CD4-positive, alpha-beta T cell (primary cell): ENCODE measurements at regions of chr13 and their contacts with region 1.

Region 1: GRCh38 chr13:41132512-41133152 is at the start of gene KBTBD6:
- DNase-seq: peak; percentile 81 to 96 (median 88)
- ATAC-seq: peak; percentile 96
- H3K4me3 ChIP-seq: peak within 1 kb of the TSS; percentile 91
- H3K4me3 Mint-ChIP-seq: peak within 1 kb of the TSS; percentile 96
- H3K27ac ChIP-seq: peak within 1 kb of the TSS; percentile 50 to 68
- H3K27ac Mint-ChIP-seq: peak within 1 kb of the TSS; percentile 86
- H3K4me1 ChIP-seq: peaks cover 37% of the 10 kb centered on the region
- H3K4me1 Mint-ChIP-seq: peaks cover 54% of the 10 kb centered on the region
- H3K27me3 ChIP-seq: no peaks in the 10 kb centered on the region
- H3K27me3 Mint-ChIP-seq: no peaks in the 10 kb centered on the region
- CTCF ChIP-seq: no peak
- total RNA-seq, gene KBTBD6: 6.8 to 7.2 TPM

Region 2: DNA sequence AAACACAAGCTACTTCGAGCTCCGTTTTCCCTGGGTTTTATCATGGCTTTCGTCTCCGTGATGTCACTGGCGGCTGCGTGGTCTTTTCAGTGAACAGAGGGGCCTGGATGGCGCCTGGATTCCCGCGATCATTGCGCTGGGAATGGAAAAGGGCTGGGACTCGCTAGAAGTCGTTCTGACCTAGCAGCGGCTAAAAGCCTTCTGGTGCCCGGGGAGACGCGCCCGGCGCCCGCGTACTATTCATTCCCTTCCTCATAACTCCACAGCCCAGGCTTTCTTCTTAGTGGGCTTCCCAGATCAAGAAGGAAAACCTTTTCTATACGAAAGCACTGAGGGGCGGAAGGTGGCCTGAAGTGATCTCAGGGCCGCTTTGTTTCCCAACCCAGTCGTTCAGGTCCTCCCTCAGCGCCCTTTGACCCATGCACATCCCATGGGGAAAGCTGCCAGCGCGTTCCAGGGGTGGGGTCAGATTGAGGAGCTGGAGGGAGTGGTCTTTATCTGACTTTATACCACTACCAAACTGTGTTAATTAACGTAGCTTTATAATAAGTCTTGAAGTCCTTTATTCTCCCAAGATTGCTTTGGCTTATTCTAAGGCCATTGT is 210.1 kb before region 1 on chr13:
- CTCF ChIA-PET with region 1: no interaction called
- POLR2A ChIA-PET with region 1: no interaction called
- intact Hi-C with region 1: loop called (anchors 5 to 10 kb)
- DNase-seq: peak in 2 of 14 experiments; percentile 9 to 37
- ATAC-seq: no peak
- H3K4me3 ChIP-seq: no peak overlapping the region
- H3K4me3 Mint-ChIP-seq: peak overlapping the region; percentile 80
- H3K27ac ChIP-seq: no peak overlapping the region
- H3K27ac Mint-ChIP-seq: peak overlapping the region; percentile 42
- H3K4me1 ChIP-seq: peaks cover 15% of the 10 kb centered on the region
- H3K4me1 Mint-ChIP-seq: peaks cover 25% of the 10 kb centered on the region
- H3K27me3 ChIP-seq: no peaks in the 10 kb centered on the region
- H3K27me3 Mint-ChIP-seq: no peaks in the 10 kb centered on the region
- CTCF ChIP-seq: no peak

Region 3: DNA sequence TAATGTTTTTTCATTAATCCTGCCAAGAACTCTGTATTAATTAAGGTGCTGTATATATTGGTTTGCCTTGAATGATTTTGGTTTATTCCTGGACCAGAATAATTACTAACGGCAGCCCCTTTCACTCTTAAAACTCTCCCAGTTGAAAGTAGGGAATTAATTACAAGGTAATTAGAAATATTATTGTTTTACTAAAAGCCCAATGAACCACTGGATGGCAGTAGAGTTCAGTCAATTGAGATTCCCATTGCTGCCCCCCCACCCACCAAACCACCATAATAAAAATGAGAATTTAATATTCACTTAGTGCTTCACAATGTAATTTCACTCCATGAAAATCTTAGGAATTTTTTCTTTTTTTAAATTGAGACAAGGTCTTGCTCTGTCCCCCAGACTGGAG is 57.6 kb before region 1 on chr13:
- CTCF ChIA-PET with region 1: no interaction called
- POLR2A ChIA-PET with region 1: no interaction called
- intact Hi-C with region 1: loop called (anchors 2 to 5 kb)
- DNase-seq: peak in 13 of 14 experiments; percentile 3 to 75 (median 20)
- ATAC-seq: peak; percentile 49
- H3K4me3 ChIP-seq: no peak overlapping the region
- H3K4me3 Mint-ChIP-seq: no peak overlapping the region
- H3K27ac ChIP-seq: no peak overlapping the region
- H3K27ac Mint-ChIP-seq: no peak overlapping the region
- H3K4me1 ChIP-seq: no peaks in the 10 kb centered on the region
- H3K4me1 Mint-ChIP-seq: no peaks in the 10 kb centered on the region
- H3K27me3 ChIP-seq: no peaks in the 10 kb centered on the region
- H3K27me3 Mint-ChIP-seq: no peaks in the 10 kb centered on the region
- CTCF ChIP-seq: peak; percentile 53

Region 4: GRCh38 chr13:41310963-41311606 is 178.5 kb after region 1 on chr13 and contains the start of gene NAA16:
- CTCF ChIA-PET with region 1: no interaction called
- POLR2A ChIA-PET with region 1: no interaction called
- intact Hi-C with region 1: loop called in 1 of 2 experiments (anchors 5 kb)
- DNase-seq: peak; percentile 89 to 97 (median 94)
- ATAC-seq: peak; percentile 85
- H3K4me3 ChIP-seq: peak within 1 kb of the TSS; percentile 90
- H3K4me3 Mint-ChIP-seq: peak within 1 kb of the TSS; percentile 97
- H3K27ac ChIP-seq: peak within 1 kb of the TSS; percentile 55 to 85
- H3K27ac Mint-ChIP-seq: peak within 1 kb of the TSS; percentile 98
- H3K4me1 ChIP-seq: peaks cover 35% of the 10 kb centered on the region
- H3K4me1 Mint-ChIP-seq: peaks cover 56% of the 10 kb centered on the region
- H3K27me3 ChIP-seq: no peaks in the 10 kb centered on the region
- H3K27me3 Mint-ChIP-seq: no peaks in the 10 kb centered on the region
- CTCF ChIP-seq: no peak
- total RNA-seq, gene NAA16: 76.9 to 80.5 TPM